A549 (cell line): ENCODE measurements at regions of chr7 and their contacts with region 1.

Region 1: DNA sequence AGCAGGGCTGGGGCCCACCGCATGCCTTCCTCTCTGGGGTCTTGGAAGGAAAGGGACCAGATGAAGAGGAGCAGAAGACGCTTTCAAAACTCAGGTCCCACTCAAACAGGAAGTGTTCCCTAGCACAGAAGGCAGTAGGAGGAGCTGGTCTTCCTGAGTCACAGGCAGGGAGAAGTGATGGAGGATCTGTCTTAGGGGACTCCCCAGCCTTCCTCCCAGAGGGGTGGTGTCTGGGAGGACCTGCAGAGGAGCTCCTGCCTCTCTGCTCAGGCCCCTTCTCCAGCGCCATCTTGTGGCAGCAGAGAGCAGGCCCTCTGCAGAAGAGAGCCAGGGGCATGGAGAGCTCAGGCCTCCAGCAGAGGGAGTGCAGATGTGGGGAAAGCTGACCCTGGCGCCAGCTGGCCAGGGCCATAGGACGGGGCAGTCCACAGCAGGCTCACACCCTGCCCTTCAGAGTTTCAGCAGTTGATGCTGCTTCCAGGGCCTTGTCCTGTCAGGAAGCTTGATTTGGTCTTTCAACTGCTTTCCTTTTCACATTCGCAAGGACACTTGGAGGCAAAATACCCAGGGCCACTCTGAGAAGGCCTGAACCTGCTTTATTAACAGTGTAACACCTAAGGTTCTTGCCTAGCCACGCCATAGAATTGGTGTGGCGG is 62.2 kb upstream of the TARP start:
- DNase-seq: peak; percentile 56 to 89
- ATAC-seq: peak; percentile 98 to 100
- H3K4me3 ChIP-seq: no peak overlapping the region
- H3K27ac ChIP-seq: 0 out of 6 replicates have a peak overlapping the region, but pooled peaks of 1 of the 2 experiments have one; percentile 42
- H3K4me1 ChIP-seq: no peaks in the 10 kb centered on the region
- CTCF ChIP-seq: peak; percentile 89
- EP300 ChIP-seq: no peak
- POLR2A ChIP-seq: no peak
- RAD21 ChIP-seq: peak; percentile 60 to 63; a peak in 4 of 5 replicates

Region 2: DNA sequence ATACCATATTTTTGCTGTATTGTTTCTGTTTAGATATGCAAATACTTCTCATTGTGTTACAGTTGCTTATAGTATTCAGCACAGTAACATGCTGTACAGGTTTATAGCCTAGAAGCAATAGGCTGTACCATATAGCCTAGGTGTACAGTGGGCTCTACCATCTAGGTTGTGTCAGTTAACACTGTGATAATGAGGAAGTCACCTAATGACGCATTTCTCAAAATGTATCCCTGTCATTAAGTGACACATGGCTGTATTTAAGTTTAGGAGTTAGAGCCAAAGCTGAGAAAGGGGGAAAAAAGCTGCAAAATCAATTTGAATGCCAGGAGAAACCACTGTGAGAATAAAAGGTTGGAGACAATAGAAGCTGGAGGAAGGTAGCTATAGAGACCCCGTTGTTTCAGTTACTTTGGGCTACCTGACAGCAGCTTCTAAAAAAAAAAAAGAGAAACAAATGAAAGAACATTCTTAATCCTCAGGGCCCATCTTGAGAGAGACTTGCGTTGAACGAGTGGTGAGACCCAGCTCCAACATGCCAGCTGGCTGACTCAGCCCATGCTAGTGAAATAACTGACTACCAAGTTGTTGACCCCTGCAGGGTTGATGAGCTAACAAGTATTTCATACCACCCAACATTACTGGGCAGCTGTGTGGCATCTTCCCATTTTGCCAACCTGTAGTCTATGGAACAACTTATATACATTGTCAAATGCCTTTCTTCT is 148.9 kb before region 1 on chr7:
- CTCF ChIA-PET with region 1: no interaction called
- POLR2A ChIA-PET with region 1: no interaction called
- DNase-seq: peak in 1 of 2 experiments; percentile 42
- ATAC-seq: peak; percentile 69 to 87; a peak in 5 of 6 replicates
- H3K4me3 ChIP-seq: no peak overlapping the region
- H3K27ac ChIP-seq: peak overlapping the region in 1 of 2 experiments; percentile 51; a peak in 2 of 6 replicates
- H3K4me1 ChIP-seq: peaks cover 35% of the 10 kb centered on the region
- CTCF ChIP-seq: no peak
- EP300 ChIP-seq: no peak
- POLR2A ChIP-seq: no peak
- RAD21 ChIP-seq: no peak

Region 3: GRCh38 chr7:38274486-38274885 is 61.1 kb before region 1 on chr7:
- CTCF ChIA-PET with region 1: no interaction called
- POLR2A ChIA-PET with region 1: no interaction called
- DNase-seq: no peak
- ATAC-seq: no peak
- H3K4me3 ChIP-seq: no peak overlapping the region
- H3K27ac ChIP-seq: no peak overlapping the region
- H3K4me1 ChIP-seq: no peaks in the 10 kb centered on the region
- CTCF ChIP-seq: no peak
- EP300 ChIP-seq: no peak
- POLR2A ChIP-seq: no peak
- RAD21 ChIP-seq: no peak

Region 4: DNA sequence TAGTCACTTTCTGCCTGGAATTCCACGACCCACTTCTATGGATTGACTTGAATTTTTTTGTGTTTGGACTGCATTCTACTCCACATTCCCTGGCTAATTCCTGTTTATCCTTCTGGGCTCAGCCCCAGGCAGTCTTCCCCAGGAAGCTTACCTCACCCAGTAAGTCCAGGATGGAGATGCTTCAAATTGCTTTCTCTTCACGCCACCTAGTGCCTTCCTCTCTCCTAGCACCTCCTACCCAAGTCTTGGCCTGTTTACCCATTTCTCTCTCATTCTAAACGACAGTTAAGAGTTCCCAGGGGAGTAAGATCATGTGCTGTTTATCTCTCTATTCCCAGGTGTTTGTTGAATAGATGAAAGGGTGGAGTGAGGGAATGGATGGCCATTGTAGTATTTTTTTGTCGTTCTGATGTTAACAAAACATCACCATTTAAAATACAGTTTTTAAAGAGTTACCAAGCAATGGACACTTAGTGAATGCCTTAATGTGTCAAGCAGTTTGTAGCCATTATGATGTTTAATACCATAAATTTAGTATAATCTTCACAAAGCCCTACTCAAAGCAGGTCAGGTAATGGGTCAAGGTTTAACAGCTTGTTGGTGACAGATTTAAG is 16.7 kb before region 1 on chr7:
- CTCF ChIA-PET with region 1: interaction called, 51 read pairs
- POLR2A ChIA-PET with region 1: interaction called, 3 read pairs
- DNase-seq: peak; percentile 61 to 79
- ATAC-seq: peak; percentile 95 to 98
- H3K4me3 ChIP-seq: no peak overlapping the region
- H3K27ac ChIP-seq: no peak overlapping the region
- H3K4me1 ChIP-seq: peaks cover 13% of the 10 kb centered on the region; the same call in 2 of the 3 replicates
- CTCF ChIP-seq: peak; percentile 74
- EP300 ChIP-seq: no peak
- POLR2A ChIP-seq: no peak
- RAD21 ChIP-seq: peak; percentile 80 to 86

Region 5: GRCh38 chr7:38369816-38370493 is 34.3 kb after region 1 on chr7:
- CTCF ChIA-PET with region 1: interaction called, 24 read pairs
- POLR2A ChIA-PET with region 1: no interaction called
- DNase-seq: peak; percentile 81 to 90
- ATAC-seq: peak; percentile 96 to 98
- H3K4me3 ChIP-seq: no peak overlapping the region
- H3K27ac ChIP-seq: no peak overlapping the region
- H3K4me1 ChIP-seq: no peaks in the 10 kb centered on the region
- CTCF ChIP-seq: peak; percentile 76
- EP300 ChIP-seq: no peak
- POLR2A ChIP-seq: no peak
- RAD21 ChIP-seq: peak; percentile 8 to 27; a peak in 2 of 5 replicates

Region 6: GRCh38 chr7:38781991-38782390 is 446.4 kb after region 1 on chr7:
- CTCF ChIA-PET with region 1: no interaction called
- POLR2A ChIA-PET with region 1: no interaction called
- DNase-seq: no peak
- ATAC-seq: no peak
- H3K4me3 ChIP-seq: no peak overlapping the region
- H3K27ac ChIP-seq: no peak overlapping the region
- H3K4me1 ChIP-seq: no peaks in the 10 kb centered on the region
- CTCF ChIP-seq: no peak
- EP300 ChIP-seq: no peak
- POLR2A ChIP-seq: no peak
- RAD21 ChIP-seq: no peak